ENCODE measurements at regions of chr2 and their contacts with region 1.

Region 1: DNA sequence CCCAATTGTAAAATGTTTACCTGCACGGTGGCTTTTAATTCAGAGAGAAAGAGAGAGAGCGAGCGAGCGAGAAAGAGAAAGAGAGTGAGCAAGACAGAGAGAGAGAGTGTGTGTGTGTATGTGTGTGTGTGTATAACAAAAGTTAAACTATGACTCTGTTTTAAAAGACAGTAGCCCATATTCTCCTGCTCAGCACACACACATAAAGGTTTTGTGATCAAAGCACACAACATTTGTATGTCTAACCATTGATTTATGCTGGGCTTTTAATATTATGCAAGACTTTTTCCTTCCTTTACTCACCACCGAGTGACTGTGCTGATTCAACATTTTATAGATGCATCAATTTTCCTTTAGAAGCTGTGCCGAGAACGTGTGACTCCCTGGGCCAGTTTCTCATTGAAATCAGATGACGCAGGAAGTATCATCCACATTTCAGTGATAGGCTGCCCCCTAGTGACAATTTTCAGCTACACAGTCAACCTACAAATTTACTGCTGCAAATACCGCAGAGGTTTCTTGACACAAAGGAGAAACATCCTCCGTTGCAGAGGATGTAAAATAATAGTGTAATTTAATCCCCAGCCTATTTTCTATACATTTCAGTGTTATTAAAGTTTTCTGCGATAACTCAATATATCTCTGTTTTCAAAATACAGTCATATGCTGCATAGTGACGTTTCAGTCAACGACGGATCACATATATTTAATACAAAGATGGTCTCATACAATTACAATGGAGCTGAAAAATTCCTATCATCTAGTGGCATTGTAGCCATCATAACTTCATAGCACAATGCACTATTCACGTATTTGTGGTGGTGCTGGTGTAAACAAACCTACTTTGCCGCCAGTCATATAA is 165.9 kb upstream of the TANK start:
- DNase-seq: peak; percentile 65 to 79
- H3K4me3 ChIP-seq: no peak overlapping the region
- H3K4me3 Mint-ChIP-seq: peak overlapping the region; percentile 1
- H3K27ac Mint-ChIP-seq: no peak overlapping the region
- H3K4me1 ChIP-seq: 0 out of 2 replicates have a peak, but pooled peaks cover 6% of the 10 kb centered on the region
- H3K4me1 Mint-ChIP-seq: peaks cover 7% of the 10 kb centered on the region
- H3K27me3 ChIP-seq: no peaks in the 10 kb centered on the region
- H3K27me3 Mint-ChIP-seq: no peaks in the 10 kb centered on the region
- CTCF ChIP-seq: peak; percentile 75 to 83

Region 2: DNA sequence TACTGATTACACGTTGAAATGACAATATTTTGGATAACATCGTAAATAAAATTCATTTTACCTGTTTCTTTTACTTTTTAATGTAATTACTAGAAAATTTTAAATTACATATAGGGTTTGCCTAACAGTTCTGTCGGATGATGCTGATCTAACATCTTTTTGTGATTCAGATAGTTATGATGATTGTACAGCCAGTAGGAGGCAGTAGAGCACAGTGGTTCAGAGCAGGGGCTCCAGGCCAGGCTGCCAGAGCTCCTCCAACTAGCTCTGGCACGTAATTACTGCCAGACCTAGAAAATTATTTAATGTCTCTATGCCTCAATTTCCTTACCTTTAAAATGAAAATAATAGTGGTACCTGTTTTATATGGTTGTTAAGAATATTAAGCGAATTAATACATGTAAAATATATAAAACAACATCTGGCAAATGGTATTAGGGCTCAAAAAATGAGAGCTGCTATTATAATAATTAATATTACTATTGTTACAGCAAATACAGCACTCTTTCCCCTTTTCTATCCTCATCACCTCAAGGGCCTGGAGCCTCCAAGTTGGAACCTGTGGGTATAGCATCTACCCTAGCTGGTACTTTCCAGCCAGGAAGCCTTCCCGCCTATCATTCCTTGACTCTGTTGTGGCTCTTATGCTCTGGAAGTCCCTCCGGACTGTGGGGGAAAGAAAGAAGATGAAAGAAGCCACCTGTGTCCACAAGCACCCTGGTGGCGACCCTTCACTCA is 884.3 kb before region 1 on chr2:
- CTCF ChIA-PET with region 1: interaction called, 12 read pairs
- POLR2A ChIA-PET with region 1: no interaction called
- intact Hi-C with region 1: loop called (anchors 1 kb)
- DNase-seq: peak; percentile 47 to 74
- H3K4me3 ChIP-seq: no peak overlapping the region
- H3K4me3 Mint-ChIP-seq: no peak overlapping the region
- H3K27ac Mint-ChIP-seq: no peak overlapping the region
- H3K4me1 ChIP-seq: no peaks in the 10 kb centered on the region
- H3K4me1 Mint-ChIP-seq: no peaks in the 10 kb centered on the region
- H3K27me3 ChIP-seq: no peaks in the 10 kb centered on the region
- H3K27me3 Mint-ChIP-seq: no peaks in the 10 kb centered on the region
- CTCF ChIP-seq: peak; percentile 76 to 84

Region 3: DNA sequence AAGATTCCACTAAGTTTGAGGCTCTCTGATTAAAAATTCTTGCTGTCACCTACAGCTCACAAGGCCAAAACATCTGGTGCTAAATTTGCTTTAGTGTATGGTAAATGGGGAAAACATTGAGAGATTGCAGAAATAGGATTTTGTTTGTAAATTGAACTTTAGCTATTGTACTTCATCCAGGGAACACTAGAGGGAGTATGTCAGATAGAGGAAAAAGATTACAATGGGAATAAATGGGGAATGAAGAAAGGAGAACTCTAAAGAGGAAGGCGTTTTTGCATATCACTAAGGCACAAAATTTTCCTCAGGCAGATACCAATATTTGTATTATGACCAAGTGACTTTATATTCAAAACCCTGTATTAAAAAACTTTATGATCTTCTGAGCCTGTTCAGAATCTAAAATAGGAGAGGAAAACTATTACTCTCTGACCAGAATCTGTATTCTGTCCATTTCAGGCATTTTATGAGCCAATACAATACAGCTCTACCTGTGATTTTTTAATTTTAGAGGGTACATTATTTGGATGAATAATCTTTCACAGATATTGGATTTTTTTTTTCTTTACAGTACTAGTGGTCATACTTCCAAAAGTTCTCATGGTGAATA is 742.0 kb before region 1 on chr2:
- CTCF ChIA-PET with region 1: interaction called, 15 read pairs
- POLR2A ChIA-PET with region 1: no interaction called
- intact Hi-C with region 1: loop called (anchors 1 kb)
- DNase-seq: peak in 1 of 2 experiments; percentile 31
- H3K4me3 ChIP-seq: no peak overlapping the region
- H3K4me3 Mint-ChIP-seq: no peak overlapping the region
- H3K27ac Mint-ChIP-seq: no peak overlapping the region
- H3K4me1 ChIP-seq: peaks cover 15% of the 10 kb centered on the region; the same call in 1 of the 2 replicates
- H3K4me1 Mint-ChIP-seq: peaks cover 7% of the 10 kb centered on the region
- H3K27me3 ChIP-seq: no peaks in the 10 kb centered on the region
- H3K27me3 Mint-ChIP-seq: no peaks in the 10 kb centered on the region
- CTCF ChIP-seq: peak; percentile 75 to 80

Region 4: GRCh38 chr2:160269803-160270570 is 724.4 kb before region 1 on chr2:
- CTCF ChIA-PET with region 1: interaction called, 14 read pairs
- POLR2A ChIA-PET with region 1: no interaction called
- intact Hi-C with region 1: loop called (anchors 1 kb)
- DNase-seq: peak; percentile 90 to 92
- H3K4me3 ChIP-seq: peak overlapping the region; percentile 65
- H3K4me3 Mint-ChIP-seq: peak overlapping the region; percentile 92
- H3K27ac Mint-ChIP-seq: peak overlapping the region; percentile 98
- H3K4me1 ChIP-seq: peaks cover 29% of the 10 kb centered on the region
- H3K4me1 Mint-ChIP-seq: peaks cover 13% of the 10 kb centered on the region
- H3K27me3 ChIP-seq: no peaks in the 10 kb centered on the region
- H3K27me3 Mint-ChIP-seq: no peaks in the 10 kb centered on the region
- CTCF ChIP-seq: peak; percentile 48 to 82

Region 5: GRCh38 chr2:160324161-160324800 is 670.1 kb before region 1 on chr2:
- CTCF ChIA-PET with region 1: interaction called, 8 read pairs
- POLR2A ChIA-PET with region 1: no interaction called
- intact Hi-C with region 1: loop called (anchors 1 kb)
- DNase-seq: peak; percentile 47 to 66
- H3K4me3 ChIP-seq: no peak overlapping the region
- H3K4me3 Mint-ChIP-seq: no peak overlapping the region
- H3K27ac Mint-ChIP-seq: no peak overlapping the region
- H3K4me1 ChIP-seq: peaks cover 13% of the 10 kb centered on the region
- H3K4me1 Mint-ChIP-seq: peaks cover 26% of the 10 kb centered on the region
- H3K27me3 ChIP-seq: no peaks in the 10 kb centered on the region
- H3K27me3 Mint-ChIP-seq: no peaks in the 10 kb centered on the region
- CTCF ChIP-seq: peak; percentile 70 to 74

Region 6: DNA sequence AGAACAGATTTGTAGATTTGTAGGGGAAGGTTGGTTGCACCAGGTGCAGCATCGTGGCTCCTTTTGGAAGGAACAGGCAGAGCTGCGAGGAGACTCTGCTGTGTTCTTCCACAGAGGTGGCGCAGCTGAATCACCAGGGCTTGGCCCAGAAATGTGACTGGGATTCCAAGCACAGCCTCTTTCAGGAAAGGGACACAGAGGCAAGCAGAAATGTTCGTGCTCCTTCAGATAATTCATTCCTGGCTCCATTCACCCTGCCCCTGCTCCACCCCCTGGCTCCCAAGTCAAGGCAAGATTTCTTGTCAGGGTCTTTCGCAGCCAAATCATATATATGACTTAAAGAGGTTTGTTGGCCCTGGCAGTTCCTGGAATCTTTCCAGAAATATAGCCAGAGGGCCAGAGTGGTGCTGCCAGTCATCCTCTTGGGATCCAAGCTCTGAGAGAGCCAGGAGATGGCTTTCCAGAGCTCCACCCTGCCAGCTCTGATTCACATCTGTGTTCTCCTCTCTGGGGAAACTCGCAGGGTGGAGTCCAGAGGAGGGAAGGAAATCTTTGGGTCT is 38.0 kb before region 1 on chr2:
- CTCF ChIA-PET with region 1: no interaction called
- POLR2A ChIA-PET with region 1: no interaction called
- intact Hi-C with region 1: no loop called
- DNase-seq: no peak
- H3K4me3 ChIP-seq: no peak overlapping the region
- H3K4me3 Mint-ChIP-seq: no peak overlapping the region
- H3K27ac Mint-ChIP-seq: no peak overlapping the region
- H3K4me1 ChIP-seq: no peaks in the 10 kb centered on the region
- H3K4me1 Mint-ChIP-seq: peaks cover 10% of the 10 kb centered on the region
- H3K27me3 ChIP-seq: no peaks in the 10 kb centered on the region
- H3K27me3 Mint-ChIP-seq: no peaks in the 10 kb centered on the region
- CTCF ChIP-seq: no peak

Region 7: DNA sequence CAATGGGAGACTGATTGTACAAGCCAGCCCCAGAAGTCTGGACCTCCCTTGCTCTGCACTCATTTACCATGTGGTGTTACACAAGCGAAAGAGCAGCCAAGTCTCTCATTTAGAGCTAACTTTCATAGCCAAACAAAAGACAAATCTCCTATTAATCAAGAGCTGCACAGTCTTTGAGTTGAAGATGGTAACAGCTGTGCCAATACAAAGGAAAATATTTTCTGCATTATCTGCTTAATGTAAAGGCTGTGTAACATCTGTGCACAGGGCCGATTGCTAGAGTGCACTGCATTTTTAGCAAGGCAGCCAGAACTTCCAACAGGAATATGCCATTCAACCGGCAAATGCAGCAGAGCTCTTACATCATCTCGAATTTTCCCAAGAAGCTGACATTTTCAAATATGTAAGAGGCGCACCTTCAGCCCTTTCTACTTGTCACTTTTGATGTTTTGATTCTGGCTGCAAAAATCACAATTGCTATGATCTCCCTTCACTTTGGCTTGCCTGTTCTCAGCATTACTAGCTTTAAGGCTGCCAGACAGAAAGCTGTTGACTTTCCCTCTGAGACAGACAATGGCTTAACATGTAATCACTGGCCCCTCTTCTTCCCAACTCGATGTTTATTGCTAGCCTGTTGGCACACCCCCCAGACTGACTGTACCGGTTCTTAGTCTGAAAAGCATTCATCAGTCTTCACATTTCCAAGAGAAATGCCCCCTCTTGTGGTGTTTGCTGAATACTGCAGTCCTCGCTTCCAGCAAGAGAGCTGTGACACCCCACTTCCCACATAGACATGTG is 69.0 kb after region 1 on chr2:
- CTCF ChIA-PET with region 1: interaction called, 10 read pairs
- POLR2A ChIA-PET with region 1: no interaction called
- intact Hi-C with region 1: loop called (anchors 1 kb)
- DNase-seq: peak; percentile 83 to 88
- H3K4me3 ChIP-seq: no peak overlapping the region
- H3K4me3 Mint-ChIP-seq: peak overlapping the region; percentile 13
- H3K27ac Mint-ChIP-seq: no peak overlapping the region
- H3K4me1 ChIP-seq: 0 out of 2 replicates have a peak, but pooled peaks cover 4% of the 10 kb centered on the region
- H3K4me1 Mint-ChIP-seq: peaks cover 6% of the 10 kb centered on the region
- H3K27me3 ChIP-seq: no peaks in the 10 kb centered on the region; the same call in 1 of the 2 replicates
- H3K27me3 Mint-ChIP-seq: no peaks in the 10 kb centered on the region
- CTCF ChIP-seq: peak; percentile 92 to 93

Region 8: GRCh38 chr2:161265874-161266273 is 271.5 kb after region 1 on chr2:
- CTCF ChIA-PET with region 1: no interaction called
- POLR2A ChIA-PET with region 1: no interaction called
- intact Hi-C with region 1: loop called (anchors 5 kb)
- DNase-seq: no peak
- H3K4me3 ChIP-seq: no peak overlapping the region
- H3K4me3 Mint-ChIP-seq: no peak overlapping the region
- H3K27ac Mint-ChIP-seq: no peak overlapping the region
- H3K4me1 ChIP-seq: no peaks in the 10 kb centered on the region
- H3K4me1 Mint-ChIP-seq: no peaks in the 10 kb centered on the region
- H3K27me3 ChIP-seq: no peaks in the 10 kb centered on the region
- H3K27me3 Mint-ChIP-seq: no peaks in the 10 kb centered on the region
- CTCF ChIP-seq: no peak